Heart left ventricle (tissue), 16 donors: ENCODE measurements at regions of chr1 and their contacts with region 1.

Region 1: DNA sequence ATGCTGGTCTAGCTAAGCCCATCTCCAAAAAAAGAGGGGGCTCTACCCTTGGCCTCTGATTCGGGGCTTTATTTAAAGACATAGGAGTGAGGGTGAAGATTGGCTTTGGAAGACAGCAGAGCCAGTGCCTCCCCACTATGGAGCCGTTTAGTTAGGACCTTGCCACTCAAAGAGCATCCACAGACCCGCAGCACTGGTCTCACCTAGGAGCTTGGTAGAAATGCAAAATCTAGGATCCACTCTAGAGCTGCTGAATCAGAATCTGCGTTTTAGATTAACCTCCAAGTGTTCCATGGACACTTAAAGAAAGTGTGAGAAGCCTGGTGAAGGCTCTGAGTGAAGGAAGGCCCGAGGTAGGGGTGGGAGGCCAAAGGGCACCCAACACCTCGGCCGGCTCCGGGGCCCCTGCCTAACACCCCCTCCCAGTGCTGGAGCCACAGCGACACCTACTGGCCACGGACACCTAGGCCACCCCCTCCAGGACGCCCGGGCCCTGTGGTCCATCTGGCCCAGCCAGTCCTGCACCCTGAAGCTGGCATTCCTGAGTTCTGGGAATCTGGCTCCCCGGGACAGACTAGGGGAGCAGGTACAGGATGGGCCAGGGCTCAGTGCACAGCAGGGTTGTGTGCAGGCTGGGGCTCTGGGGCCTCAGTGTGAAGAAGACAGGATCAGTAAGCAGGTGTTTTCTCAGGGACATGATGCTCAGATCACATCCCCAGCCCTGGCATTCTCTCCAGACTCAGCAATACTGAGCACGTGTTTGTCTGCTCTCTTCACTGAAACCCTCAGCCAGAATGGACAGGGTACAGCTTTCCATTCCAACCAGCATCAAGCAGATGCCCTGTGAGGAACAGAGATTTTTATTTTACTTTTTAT is 79.2 kb downstream of the TMEM53 start:
- DNase-seq: peak; percentile 77 to 93 (median 79)
- ATAC-seq: peak; percentile 92 to 96 (median 94)
- H3K4me3 ChIP-seq: no peak overlapping the region
- H3K27ac ChIP-seq: no peak overlapping the region
- H3K4me1 ChIP-seq: peaks cover 0 to 3% (median 0%) of the 10 kb centered on the region in 12 donors
- H3K27me3 ChIP-seq: peaks cover 0 to 11% (median 0%) of the 10 kb centered on the region in 9 donors
- CTCF ChIP-seq: peak in 11 of 12 donors; percentile 88 to 99 (median 98)
- POLR2A ChIP-seq: no peak

Region 2: DNA sequence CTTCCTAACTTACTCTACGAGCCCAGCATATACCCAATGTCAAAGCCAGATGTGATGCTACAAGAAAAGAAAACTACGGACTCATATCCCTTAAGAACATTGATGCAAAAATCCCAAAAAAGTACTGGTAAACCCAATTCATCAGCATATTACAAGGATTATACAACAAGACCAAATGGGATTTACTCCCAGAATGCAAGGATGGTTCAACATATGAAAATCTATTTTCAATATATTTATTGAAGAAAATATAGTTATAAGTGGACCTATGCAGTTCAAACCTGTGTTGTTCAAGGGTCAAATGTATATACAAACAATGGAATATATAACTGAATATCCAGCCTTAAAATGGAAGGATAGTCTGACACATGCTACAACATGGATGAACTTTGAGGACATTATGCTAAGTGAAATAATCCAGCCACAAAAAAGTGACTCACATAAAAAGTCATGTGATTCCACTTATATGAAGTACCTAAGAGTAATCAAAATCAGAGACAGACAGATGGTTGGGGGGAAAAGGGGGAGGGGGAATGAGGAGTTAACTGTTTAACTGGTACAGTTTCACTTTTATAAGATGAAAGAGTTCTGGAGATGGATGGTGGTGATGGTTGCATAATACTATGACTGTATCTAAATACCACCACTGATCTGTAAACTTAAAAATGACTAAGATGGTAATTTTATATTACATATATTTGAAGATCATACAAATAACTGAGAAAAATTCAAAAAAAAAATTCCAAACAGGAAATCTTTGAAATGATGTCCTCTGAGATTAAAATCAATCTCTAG is 449.9 kb before region 1 on chr1:
- intact Hi-C with region 1: no loop called
- DNase-seq: no peak
- ATAC-seq: no peak
- H3K4me3 ChIP-seq: no peak overlapping the region
- H3K27ac ChIP-seq: no peak overlapping the region
- H3K4me1 ChIP-seq: no peaks in the 10 kb centered on the region
- H3K27me3 ChIP-seq: peaks cover 0 to 5% (median 3%) of the 10 kb centered on the region in 9 donors
- CTCF ChIP-seq: no peak
- POLR2A ChIP-seq: no peak

Region 3: DNA sequence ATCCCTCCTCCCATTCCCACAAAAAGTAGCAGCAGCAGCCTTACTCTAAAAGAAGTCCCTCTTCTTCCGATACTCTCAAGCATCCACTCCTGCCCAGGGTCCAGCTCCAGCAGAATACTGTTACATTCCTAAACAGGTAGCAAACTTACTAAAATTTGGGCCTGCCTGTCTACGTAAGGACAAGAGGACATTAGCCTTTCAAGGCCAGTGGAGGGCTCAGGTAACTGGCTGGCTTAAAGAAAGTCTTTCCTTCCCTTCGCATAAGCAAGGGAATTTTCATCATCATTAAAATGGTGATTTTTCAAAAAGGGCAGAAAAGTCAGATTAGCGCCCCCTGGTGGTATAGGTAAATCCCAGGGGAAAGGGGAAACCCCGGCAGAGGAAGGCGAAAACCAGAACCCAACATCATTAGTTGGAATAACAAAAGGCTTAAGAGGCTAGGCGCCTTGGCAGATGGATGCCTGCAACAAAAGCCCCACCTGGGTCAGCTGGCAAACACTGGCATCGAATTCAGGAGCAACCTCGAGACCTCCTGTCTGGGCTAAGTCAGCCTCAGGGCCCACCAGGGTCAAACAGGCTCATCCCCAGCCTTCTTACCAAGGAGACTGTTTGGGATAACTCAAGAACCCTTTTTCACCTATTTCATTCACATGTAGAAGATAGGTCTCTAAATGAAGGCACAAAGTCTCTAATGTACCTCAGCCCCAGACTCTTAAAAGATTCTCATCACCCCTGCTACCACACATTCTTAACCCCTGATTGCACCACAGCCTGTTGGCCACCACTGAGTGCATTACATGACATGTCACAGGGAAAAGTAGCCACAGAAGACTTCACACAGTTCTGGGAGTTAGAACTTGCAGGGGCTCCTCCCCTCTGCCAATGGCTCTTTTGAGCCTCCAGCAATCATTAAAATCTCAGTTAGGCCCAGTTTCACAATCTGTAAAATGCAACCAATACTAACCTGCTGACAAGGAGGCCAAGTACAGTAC is 276.7 kb before region 1 on chr1:
- intact Hi-C with region 1: loop called in 1 of 10 experiments (anchors 5 kb)
- DNase-seq: peak in 2 of 5 donors; percentile 22 to 28
- ATAC-seq: peak in 1 of 4 donors; percentile 26
- H3K4me3 ChIP-seq: no peak overlapping the region
- H3K27ac ChIP-seq: no peak overlapping the region
- H3K4me1 ChIP-seq: peaks cover 0 to 6% (median 0%) of the 10 kb centered on the region in 12 donors
- H3K27me3 ChIP-seq: no peaks in the 10 kb centered on the region
- CTCF ChIP-seq: peak; percentile 62 to 87 (median 76)
- POLR2A ChIP-seq: no peak

Region 4: GRCh38 chr1:44377925-44378784 is 217.0 kb before region 1 on chr1:
- intact Hi-C with region 1: loop called (anchors 1 to 5 kb)
- DNase-seq: peak in 3 of 5 donors; percentile 30 to 50 (median 35)
- ATAC-seq: peak in 1 of 4 donors; percentile 50
- H3K4me3 ChIP-seq: no peak overlapping the region
- H3K27ac ChIP-seq: no peak overlapping the region
- H3K4me1 ChIP-seq: no peaks in the 10 kb centered on the region
- H3K27me3 ChIP-seq: no peaks in the 10 kb centered on the region
- CTCF ChIP-seq: peak; percentile 59 to 85 (median 74)
- POLR2A ChIP-seq: no peak